Right lobe of liver (tissue), 6 donors: ENCODE measurements at regions of chr18 and their contacts with region 1.

Region 1: DNA sequence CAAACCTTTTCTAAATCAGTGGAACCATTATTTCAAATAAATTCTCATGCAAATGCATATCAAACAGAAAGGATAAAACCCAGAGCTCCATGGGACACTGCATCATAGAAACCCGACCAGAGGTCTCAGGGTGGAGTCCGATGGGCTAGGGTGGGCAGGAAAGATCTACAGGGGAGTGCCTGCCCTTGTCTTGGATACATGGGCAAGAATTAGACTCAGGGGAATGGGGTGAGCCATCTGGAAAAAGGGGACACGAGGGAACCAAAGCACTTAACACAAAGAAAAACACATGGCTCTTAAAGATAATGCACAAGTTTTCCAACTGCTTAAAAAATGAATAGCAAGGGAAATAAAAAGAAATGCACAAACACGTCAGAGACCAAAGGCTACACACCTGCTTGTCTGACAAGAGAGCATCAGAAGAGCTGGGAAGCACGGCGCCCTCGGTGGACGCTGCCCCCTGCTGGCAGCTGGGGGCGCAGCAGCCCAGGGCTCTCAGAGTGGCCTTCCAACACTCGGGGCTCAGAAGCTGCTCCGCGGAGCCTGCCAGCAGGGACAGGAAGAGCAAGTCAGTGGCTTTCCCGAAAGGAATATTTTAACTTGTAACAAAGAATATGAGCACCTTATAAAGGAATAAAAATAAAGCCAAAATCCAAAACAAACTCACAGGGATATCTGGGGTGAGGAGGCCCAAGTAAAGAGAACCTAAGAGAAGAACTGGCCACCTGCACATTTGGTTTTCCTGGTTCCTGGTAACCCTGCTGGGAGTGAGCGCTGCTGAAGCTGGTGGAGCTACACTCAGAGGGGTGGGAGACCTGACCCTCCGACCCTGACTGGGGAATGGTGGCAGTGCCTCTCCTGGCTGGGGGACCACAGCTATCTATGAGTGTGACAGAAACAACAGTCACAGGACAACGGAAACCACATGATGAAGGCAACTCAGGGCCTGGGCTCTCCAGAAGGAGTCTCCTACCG is 54.5 kb downstream of the SIGLEC15 start:
- DNase-seq: peak; percentile 75 to 80 (median 75)
- ATAC-seq: peak; percentile 100
- H3K4me3 ChIP-seq: no peak overlapping the region
- H3K27ac ChIP-seq: no peak overlapping the region
- H3K4me1 ChIP-seq: no peaks in the 10 kb centered on the region
- H3K27me3 ChIP-seq: no peaks in the 10 kb centered on the region
- CTCF ChIP-seq: peak; percentile 96 to 100 (median 100)
- POLR2A ChIP-seq: no peak

Region 2: DNA sequence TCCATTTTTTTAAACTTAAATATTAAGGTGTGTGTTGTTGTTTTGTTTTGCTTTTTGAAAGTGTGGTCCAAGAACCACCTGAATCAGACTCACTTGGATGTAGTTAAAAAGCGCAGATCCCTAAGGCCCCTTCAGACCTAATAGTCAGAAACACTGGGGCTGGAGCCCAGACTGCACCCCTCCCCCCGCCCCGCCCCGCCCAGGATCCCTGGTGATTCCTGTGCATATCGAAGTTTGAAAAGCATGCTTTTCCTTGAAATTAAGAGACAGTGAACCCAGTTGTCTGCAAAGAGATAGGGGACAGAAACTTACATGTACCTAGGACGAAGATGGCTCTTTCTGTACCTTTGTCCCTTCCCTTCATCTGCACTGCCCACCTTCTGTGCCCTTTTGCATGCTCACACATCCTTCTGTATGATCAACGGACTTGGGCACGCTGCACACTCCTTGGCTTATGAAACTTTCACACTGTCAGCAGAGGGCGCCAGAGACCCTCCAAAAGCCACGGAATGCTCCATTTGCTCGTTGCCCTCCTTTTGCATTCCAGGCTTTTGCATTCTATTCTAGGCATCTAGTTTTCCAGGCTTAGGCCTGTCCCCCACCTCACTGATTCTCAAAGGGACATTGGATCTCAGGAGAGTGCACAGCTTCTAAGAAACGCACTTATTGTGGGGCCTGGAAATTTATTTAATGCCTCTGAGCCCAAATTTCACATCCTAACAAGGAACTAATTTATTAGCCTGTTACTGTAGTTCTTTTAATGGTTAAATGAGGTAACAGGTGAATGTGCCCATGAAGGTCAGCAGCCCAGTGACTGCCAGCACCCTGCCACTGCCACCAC is 188.8 kb before region 1 on chr18:
- intact Hi-C with region 1: loop called in 1 of 2 experiments (anchors 10 kb)
- DNase-seq: peak; percentile 69 to 78 (median 76)
- ATAC-seq: peak; percentile 93 to 99 (median 97)
- H3K4me3 ChIP-seq: no peak overlapping the region
- H3K27ac ChIP-seq: no peak overlapping the region
- H3K4me1 ChIP-seq: no peaks in the 10 kb centered on the region
- H3K27me3 ChIP-seq: no peaks in the 10 kb centered on the region
- CTCF ChIP-seq: peak; percentile 75 to 88 (median 82)
- POLR2A ChIP-seq: no peak

Region 3: GRCh38 chr18:45715341-45715740 is 164.6 kb before region 1 on chr18:
- intact Hi-C with region 1: loop called in 1 of 2 experiments (anchors 10 kb)
- DNase-seq: no peak
- ATAC-seq: no peak
- H3K4me3 ChIP-seq: no peak overlapping the region
- H3K27ac ChIP-seq: no peak overlapping the region
- H3K4me1 ChIP-seq: no peaks in the 10 kb centered on the region
- H3K27me3 ChIP-seq: no peaks in the 10 kb centered on the region
- CTCF ChIP-seq: no peak
- POLR2A ChIP-seq: no peak

Region 4: DNA sequence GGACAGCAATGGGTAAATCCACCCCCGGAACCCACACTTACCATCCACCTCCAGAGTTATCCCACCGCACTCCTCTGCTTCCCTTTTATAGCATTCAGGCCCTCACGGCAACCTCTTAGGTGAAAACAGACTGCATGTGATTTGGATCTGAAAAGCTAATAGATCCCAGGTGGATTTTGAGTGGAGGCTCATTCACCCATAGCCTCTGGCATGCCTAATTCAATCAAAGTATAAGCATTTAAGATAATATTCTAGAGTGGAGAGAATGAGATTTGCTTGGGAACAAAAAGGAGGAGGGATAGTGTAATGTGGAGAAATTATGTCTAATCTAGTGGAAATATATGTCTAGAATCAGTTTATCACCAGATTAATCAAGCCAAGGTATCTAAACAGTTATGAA is 138.9 kb before region 1 on chr18:
- intact Hi-C with region 1: no loop called
- DNase-seq: no peak
- ATAC-seq: no peak
- H3K4me3 ChIP-seq: no peak overlapping the region
- H3K27ac ChIP-seq: no peak overlapping the region
- H3K4me1 ChIP-seq: no peaks in the 10 kb centered on the region
- H3K27me3 ChIP-seq: no peaks in the 10 kb centered on the region
- CTCF ChIP-seq: no peak
- POLR2A ChIP-seq: no peak

Region 5: DNA sequence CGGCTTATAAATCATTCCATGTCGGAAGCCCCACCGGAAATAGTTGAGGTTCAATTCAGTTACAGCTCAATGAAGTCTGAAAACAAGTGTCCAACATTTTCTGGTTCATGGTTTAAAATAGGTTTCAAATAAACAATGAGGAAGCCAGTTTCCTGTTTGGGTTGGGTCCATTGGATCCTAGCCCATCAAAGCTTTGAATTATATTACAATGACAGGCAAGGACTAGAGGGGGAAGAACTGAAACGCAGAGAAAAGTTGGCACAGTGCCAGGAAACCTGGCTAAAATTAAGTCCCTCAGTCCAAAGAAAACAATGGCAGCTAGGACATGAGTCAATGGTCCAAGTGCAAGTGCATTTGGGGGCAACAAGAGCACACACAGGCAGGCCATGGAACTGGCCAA is 124.0 kb before region 1 on chr18:
- intact Hi-C with region 1: no loop called
- DNase-seq: peak in 1 of 3 donors; percentile 51
- ATAC-seq: peak; percentile 62 to 90 (median 72)
- H3K4me3 ChIP-seq: no peak overlapping the region
- H3K27ac ChIP-seq: no peak overlapping the region
- H3K4me1 ChIP-seq: no peaks in the 10 kb centered on the region
- H3K27me3 ChIP-seq: no peaks in the 10 kb centered on the region
- CTCF ChIP-seq: no peak
- POLR2A ChIP-seq: no peak